Caki2 (cell line): ENCODE measurements at regions of chr6 and their contacts with region 1.

Region 1: GRCh38 chr6:52399511-52400312 is 20.4 kb upstream of the EFHC1 start:
- DNase-seq: peak; percentile 57

Region 2: GRCh38 chr6:52020945-52021570 is 378.7 kb before region 1 on chr6:
- in situ Hi-C with region 1: no loop called
- DNase-seq: peak; percentile 38

Region 3: DNA sequence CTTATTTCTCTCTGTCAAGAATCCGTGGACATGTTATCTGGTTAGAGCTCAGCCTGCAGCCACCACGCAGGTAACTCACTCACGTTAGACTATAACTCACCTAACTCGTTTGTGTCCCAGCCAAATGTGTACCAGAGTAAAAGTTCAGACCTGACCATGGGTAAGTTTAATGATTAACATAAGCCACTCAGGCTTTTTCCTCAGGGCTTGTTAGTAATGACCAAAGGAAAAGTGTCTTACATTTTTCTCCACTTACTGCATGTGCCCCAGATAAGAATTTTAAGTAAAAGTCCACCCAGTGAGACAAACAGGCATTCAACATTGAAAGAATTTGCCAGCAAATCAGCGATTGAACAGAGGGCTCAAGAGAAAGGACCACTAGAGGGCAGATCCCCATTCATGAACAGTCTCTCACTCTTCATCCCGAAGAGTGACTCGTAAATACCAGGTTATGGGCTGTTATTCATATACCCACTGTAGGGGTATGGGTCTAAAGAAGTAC is 312.2 kb before region 1 on chr6 and contains the start of gene PKHD1:
- in situ Hi-C with region 1: no loop called
- DNase-seq: peak; percentile 94
- total RNA-seq, gene PKHD1: 3.4 and 4.2 TPM in 2 replicates

Region 4: GRCh38 chr6:52284460-52285176 is 115.1 kb before region 1 on chr6 and contains the start of gene MCM3:
- in situ Hi-C with region 1: loop called (anchors 10 kb)
- DNase-seq: peak; percentile 100
- total RNA-seq, gene MCM3: 209 and 231 TPM in 2 replicates